Cardiac septum (tissue), 1 donor: ENCODE measurements at regions of chr1 and their contacts with region 1.

Region 1: GRCh38 chr1:41432481-41433280 is 51.8 kb downstream of the EDN2 start:
- DNase-seq: peak; percentile 95

Region 2: DNA sequence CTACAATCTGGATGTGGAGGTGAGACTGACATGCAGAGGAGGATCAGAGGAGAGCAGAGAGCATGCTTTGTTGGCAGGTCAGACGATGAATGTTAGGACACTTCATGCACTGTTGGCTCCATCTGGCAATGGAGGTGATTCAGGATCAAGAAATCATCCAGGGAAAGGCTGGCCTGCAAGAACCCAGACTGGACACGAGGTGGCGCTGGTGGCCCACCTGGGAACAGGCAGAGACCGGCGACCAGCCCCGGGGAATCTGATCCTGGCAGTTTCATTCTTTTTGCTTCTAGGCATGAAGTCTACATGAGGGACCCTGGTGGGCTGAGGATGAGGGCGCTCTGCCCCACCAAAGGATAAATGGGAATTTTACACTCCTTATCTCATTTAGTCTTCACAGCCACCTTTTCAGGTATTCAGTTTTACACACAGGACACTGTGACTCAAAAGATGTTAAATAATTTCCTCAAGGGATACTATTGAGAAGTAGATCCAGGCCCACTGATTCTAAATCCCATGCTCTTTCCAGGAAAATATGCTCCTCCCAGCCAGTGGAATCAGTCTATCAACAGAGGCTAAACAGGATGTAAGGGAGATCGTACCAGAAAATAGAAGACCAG is 164.4 kb before region 1 on chr1:
- intact Hi-C with region 1: loop called (anchors 5 kb)
- DNase-seq: peak; percentile 85

Region 3: GRCh38 chr1:41322835-41323627 is 109.7 kb before region 1 on chr1:
- intact Hi-C with region 1: loop called (anchors 5 kb)
- DNase-seq: no peak